ENCODE measurements at regions of chr7 and their contacts with region 1.

Region 1: DNA sequence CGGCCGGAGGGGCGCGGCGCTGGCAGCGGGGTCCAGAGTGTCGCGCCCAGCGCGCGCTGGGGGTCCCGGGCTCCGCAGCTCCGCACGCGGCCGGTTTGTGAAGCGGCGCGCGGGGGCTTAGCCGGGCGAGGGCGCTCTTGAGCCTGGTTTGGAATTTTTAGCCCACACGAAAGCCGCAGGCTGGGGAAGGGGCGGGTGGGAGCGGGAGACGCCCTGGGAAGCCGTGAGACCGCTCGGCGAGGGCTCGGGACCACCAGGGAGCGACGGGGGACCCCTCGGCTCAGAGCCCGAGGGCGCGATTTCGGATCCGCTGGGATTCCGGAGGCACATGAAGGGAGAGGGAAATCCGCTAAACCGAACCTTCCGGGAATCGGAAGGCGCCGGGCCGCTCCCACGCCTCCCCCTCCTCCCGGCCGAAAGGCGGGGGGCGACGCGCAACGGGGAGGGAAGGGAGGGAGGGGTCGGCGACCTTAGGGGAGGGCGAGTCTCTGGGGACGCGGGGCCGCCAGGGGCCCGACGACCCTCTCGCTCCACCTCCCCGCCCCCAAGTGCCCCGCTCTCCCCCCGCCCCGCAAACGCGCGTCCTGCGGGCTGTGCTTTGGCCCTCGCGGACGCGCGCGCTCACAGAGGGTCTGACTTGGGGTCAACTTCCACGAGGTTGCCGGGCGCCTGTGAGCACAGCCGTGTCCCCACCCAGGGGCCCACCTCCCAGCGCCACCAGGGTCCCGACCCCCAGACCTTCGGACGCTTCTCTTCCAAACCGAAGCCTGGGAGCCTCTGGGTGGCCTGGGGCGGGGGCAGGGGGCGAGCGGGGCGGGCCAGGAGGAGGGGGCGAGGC is 5.1 kb upstream of the ELFN1 start:
- DNase-seq: peak; percentile 46
- ATAC-seq: peak; percentile 19; the same call in 1 of the 2 replicates
- H3K4me3 ChIP-seq: peak overlapping the region; percentile 59
- H3K27ac ChIP-seq: no peak overlapping the region
- H3K4me1 ChIP-seq: 0 out of 2 replicates have a peak, but pooled peaks cover 5% of the 10 kb centered on the region
- H3K27me3 ChIP-seq: peaks cover 43% of the 10 kb centered on the region
- CTCF ChIP-seq: peak; percentile 72

Region 2: DNA sequence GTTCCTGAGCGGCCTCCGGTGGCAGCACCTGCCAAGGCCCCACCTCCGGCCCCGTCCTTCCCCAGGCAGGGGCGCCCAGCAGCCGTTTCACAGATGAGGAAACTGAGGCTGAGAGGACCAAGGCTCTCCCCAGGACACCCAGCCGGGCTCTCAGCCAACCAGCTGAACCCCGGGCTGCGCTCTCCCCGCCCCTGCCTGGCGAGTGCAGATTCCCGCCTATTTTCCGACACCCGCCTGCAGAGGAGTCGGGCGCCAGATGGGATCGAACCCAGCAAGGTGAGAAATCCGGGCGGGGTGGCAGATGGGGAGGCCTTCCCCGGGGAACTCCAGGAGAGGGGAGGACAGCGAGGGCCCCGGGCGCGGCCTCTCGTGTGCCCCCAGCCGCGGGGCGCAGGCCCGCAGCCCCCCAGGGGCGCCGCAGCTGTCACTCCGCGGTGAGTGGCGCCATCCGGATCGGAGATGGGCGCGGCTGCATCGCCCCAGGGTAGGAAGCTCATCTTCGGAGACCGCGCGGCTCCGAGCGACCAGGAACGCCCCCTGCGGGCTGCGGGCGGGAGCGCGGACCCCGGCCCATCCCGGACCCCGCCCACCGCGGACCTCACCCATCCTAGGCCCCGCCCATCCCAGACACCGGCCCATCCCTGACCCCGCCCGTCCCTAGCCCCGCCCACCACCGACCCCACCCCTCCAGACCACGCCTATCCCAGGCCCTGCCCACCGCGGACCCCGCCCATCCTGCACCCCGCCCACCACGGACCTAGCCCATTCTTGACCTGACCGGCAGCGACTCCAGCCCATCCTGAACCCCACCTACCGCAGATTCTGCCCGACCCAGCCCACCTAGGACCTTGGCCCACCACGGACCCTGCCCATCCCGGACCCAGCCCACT is 296.0 kb before region 1 on chr7:
- CTCF ChIA-PET with region 1: no interaction called
- POLR2A ChIA-PET with region 1: no interaction called
- intact Hi-C with region 1: no loop called
- DNase-seq: peak; percentile 43
- ATAC-seq: peak; percentile 37; the same call in 1 of the 2 replicates
- H3K4me3 ChIP-seq: no peak overlapping the region
- H3K27ac ChIP-seq: no peak overlapping the region
- H3K4me1 ChIP-seq: peaks cover 3% of the 10 kb centered on the region; the same call in 1 of the 2 replicates
- H3K27me3 ChIP-seq: peaks cover 44% of the 10 kb centered on the region
- CTCF ChIP-seq: peak; percentile 27; the same call in 1 of the 2 replicates

Region 3: GRCh38 chr7:1758028-1758858 is 93.3 kb after region 1 on chr7:
- CTCF ChIA-PET with region 1: no interaction called
- POLR2A ChIA-PET with region 1: no interaction called
- intact Hi-C with region 1: loop called (anchors 10 kb)
- DNase-seq: peak; percentile 68
- ATAC-seq: peak; percentile 84
- H3K4me3 ChIP-seq: no peak overlapping the region
- H3K27ac ChIP-seq: no peak overlapping the region
- H3K4me1 ChIP-seq: no peaks in the 10 kb centered on the region
- H3K27me3 ChIP-seq: peaks cover 23% of the 10 kb centered on the region
- CTCF ChIP-seq: peak; percentile 59

Region 4: GRCh38 chr7:2209146-2209960 is 544.4 kb after region 1 on chr7:
- CTCF ChIA-PET with region 1: no interaction called
- POLR2A ChIA-PET with region 1: no interaction called
- intact Hi-C with region 1: loop called (anchors 5 kb)
- DNase-seq: peak; percentile 31
- ATAC-seq: peak; percentile 69
- H3K4me3 ChIP-seq: no peak overlapping the region
- H3K27ac ChIP-seq: no peak overlapping the region
- H3K4me1 ChIP-seq: no peaks in the 10 kb centered on the region
- H3K27me3 ChIP-seq: no peaks in the 10 kb centered on the region
- CTCF ChIP-seq: peak; percentile 63

Region 5: GRCh38 chr7:2281541-2281940 is 616.6 kb after region 1 on chr7:
- CTCF ChIA-PET with region 1: interaction called, 14 read pairs
- POLR2A ChIA-PET with region 1: no interaction called
- intact Hi-C with region 1: no loop called
- DNase-seq: no peak
- ATAC-seq: no peak
- H3K4me3 ChIP-seq: no peak overlapping the region
- H3K27ac ChIP-seq: no peak overlapping the region
- H3K4me1 ChIP-seq: no peaks in the 10 kb centered on the region
- H3K27me3 ChIP-seq: no peaks in the 10 kb centered on the region
- CTCF ChIP-seq: no peak